Activated naive CD4-positive, alpha-beta T cell treated with anti-CD3 and anti-CD28 coated beads for 36 hours (primary cell): ENCODE measurements at regions of chr15 and their contacts with region 1.

Region 1: DNA sequence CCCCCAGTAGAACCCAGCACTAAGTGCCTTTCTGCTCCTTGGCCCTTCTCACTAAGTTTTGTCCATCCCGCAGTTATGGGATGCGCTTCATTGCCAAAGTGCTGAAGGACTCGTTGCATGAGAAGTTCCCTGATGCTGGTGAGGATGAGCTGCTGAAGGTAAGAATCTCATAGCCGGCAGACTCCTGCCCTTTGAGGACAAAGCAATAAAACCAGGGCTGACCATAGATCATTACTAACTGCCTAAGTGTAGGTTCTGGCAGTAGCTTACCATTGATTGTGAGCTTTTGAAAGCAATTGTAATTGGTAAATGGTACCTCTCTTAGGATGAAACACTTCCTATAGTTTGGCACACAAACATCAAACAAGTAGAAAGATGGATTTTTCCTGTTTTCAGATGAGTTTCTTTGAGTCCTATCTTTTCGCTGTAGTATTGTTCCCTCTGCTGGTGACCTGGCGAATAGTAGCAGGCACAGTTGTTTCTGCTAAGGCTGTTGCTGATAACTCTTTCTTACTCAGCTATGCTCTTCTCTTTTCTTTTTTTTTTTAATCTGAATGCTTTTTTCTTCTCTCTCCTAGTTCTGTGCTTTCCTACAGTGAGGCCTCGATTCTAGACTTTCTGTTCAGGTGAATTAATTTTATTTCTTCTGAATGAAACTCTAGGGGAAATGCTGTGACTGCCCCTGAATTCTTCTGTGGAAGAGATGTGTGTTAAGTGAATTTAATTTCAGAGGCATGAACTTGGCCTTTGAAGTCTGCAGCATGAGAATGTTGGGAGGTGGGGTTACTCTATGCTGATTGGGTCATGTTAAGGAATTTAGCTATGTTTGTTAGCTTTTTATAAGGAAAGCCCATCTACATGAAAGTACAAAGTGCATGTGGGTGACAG is 47.4 kb upstream of the CRTC3 start:
- DNase-seq: peak; percentile 74
- H3K4me3 Mint-ChIP-seq: no peak overlapping the region
- H3K27ac Mint-ChIP-seq: no peak overlapping the region
- H3K4me1 Mint-ChIP-seq: peaks cover 16% of the 10 kb centered on the region
- H3K27me3 Mint-ChIP-seq: no peaks in the 10 kb centered on the region

Region 2: DNA sequence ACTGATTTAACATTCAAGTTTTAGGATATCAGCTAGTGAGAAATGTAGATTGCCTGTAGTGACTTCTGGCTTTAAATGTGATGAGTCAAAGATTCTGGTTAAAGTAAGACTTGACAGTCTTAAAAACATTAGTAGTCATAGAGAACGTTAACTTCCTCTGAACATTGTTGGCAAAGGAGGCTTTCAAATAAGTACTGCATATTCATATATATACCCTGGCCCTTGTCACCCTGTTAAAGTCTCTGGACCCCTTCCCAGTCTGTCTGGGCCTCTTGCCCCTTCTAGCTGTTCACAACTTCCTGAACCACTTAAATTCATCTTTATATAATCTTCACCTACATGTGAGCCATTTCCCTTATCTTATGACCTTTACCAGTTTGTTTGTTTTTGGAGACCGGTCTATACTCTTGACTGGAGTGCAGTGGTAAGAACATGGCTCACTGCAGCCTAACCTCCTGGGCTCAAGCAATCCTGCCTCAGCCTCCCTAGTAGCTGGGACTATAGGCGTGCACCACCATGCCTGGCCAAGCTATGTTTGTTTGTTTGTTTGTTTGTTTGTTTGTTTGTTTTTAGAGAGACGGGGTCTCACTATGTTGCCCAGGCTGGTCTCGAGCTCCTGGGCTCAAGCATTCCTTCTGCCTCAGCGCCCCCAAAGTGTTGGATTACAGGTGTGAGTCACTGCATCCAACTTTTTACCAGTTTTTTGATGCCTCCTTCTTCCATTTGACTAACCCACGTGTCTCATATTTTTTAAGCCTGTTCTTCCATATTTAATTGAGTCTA is 17.0 kb before region 1 on chr15:
- CTCF ChIA-PET with region 1: interaction called, 16 read pairs
- intact Hi-C with region 1: no loop called
- DNase-seq: peak; percentile 11
- H3K4me3 Mint-ChIP-seq: no peak overlapping the region
- H3K27ac Mint-ChIP-seq: peak overlapping the region; percentile 32
- H3K4me1 Mint-ChIP-seq: peaks cover 3% of the 10 kb centered on the region
- H3K27me3 Mint-ChIP-seq: no peaks in the 10 kb centered on the region

Region 3: DNA sequence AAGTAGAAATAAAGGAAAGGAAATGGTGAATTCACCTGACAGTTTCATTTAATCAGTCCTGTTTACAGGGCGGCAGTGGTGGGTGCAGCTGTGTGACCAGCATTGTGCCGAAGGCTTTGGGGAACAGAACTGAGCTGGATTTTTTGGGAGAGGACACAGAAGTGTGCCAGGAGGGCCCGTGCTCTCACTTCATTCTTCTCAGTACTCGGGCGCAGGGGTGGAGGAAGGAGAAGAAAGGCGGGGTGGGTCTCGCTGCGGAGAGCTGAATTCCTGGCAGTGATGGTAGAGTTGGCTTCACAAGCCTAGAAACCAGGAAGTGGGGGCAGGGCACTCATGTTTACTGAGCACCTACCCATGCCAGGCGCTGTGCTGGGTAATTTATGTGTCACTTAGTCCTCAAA is 111.9 kb after region 1 on chr15:
- CTCF ChIA-PET with region 1: no interaction called
- intact Hi-C with region 1: no loop called
- DNase-seq: peak; percentile 97
- H3K4me3 Mint-ChIP-seq: peak overlapping the region; percentile 77
- H3K27ac Mint-ChIP-seq: peak overlapping the region; percentile 99
- H3K4me1 Mint-ChIP-seq: peaks cover 77% of the 10 kb centered on the region
- H3K27me3 Mint-ChIP-seq: no peaks in the 10 kb centered on the region

Region 4: GRCh38 chr15:90638201-90638691 is 155.9 kb after region 1 on chr15:
- CTCF ChIA-PET with region 1: no interaction called
- intact Hi-C with region 1: no loop called
- DNase-seq: no peak
- H3K4me3 Mint-ChIP-seq: no peak overlapping the region
- H3K27ac Mint-ChIP-seq: peak overlapping the region; percentile 1
- H3K4me1 Mint-ChIP-seq: peaks cover 5% of the 10 kb centered on the region
- H3K27me3 Mint-ChIP-seq: no peaks in the 10 kb centered on the region